HEK293 (cell line): ENCODE measurements at regions of chr2 and their contacts with region 1.

Region 1: GRCh38 chr2:70641263-70641784 is 87.7 kb upstream of the TGFA start:
- H3K4me3 ChIP-seq: no peak overlapping the region
- H3K27ac ChIP-seq: no peak overlapping the region
- H3K4me1 ChIP-seq: no peaks in the 10 kb centered on the region
- CTCF ChIP-seq: no peak

Region 2: GRCh38 chr2:70340921-70341765 is 300.2 kb before region 1 on chr2:
- CTCF ChIA-PET with region 1: interaction called, 53 read pairs
- POLR2A ChIA-PET with region 1: no interaction called
- H3K4me3 ChIP-seq: no peak overlapping the region
- H3K27ac ChIP-seq: no peak overlapping the region
- H3K4me1 ChIP-seq: no peaks in the 10 kb centered on the region
- CTCF ChIP-seq: peak; percentile 88